ENCODE measurements at regions of chr7 and their contacts with region 1.

Region 1: DNA sequence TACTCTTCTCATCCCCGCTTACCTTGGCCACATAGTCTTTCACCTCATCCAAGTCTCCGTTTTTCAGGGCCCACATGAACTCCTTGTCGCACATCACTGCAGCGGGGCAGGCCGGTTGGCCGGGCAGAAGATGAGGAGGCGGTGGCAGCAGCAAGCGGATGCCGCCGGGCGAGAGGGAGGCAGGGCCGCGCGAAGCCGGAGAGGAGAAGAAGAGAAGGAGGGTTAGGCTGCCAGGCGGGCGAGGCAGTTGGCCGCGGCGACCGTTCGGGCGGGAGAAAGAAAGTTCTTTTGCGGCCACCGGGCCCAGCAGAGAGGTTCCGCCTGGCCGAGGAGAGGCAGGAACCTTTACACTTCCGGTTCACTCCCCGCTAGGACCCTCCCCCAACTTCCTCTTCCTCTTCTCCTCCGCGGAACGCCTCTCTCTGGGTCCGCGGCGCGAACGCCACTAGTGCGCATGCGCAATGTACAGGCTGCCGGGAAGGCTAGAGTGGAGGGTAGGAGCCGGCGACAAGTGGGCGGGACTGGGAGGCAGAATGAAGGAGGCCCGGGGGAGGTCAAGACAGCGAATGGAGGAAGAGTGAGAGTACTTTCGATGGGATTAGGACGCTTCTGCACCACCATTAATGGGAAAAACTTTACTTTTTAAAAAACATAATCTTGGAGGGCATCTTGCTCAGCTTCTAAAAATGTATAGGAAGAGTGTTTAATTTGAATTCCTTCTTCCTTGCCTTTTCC is at the start of gene MTPN:
- DNase-seq: peak; percentile 99
- H3K4me3 Mint-ChIP-seq: peak within 1 kb of the TSS; percentile 90
- H3K27ac Mint-ChIP-seq: peak within 1 kb of the TSS; percentile 92
- H3K4me1 Mint-ChIP-seq: peaks cover 73% of the 10 kb centered on the region
- H3K27me3 Mint-ChIP-seq: no peaks in the 10 kb centered on the region
- total RNA-seq, gene MTPN: 138 to 143 TPM

Region 2: GRCh38 chr7:135147899-135148721 is 829.1 kb before region 1 on chr7 and contains the start of gene TMEM140:
- CTCF ChIA-PET with region 1: no interaction called
- POLR2A ChIA-PET with region 1: no interaction called
- intact Hi-C with region 1: loop called (anchors 5 kb)
- DNase-seq: peak; percentile 73
- H3K4me3 Mint-ChIP-seq: peak within 1 kb of the TSS; percentile 83
- H3K27ac Mint-ChIP-seq: peak within 1 kb of the TSS; percentile 95
- H3K4me1 Mint-ChIP-seq: peaks cover 60% of the 10 kb centered on the region
- H3K27me3 Mint-ChIP-seq: no peaks in the 10 kb centered on the region
- total RNA-seq, gene TMEM140: 8.6 to 10.0 TPM

Region 3: GRCh38 chr7:135886345-135887132 is 90.6 kb before region 1 on chr7:
- CTCF ChIA-PET with region 1: no interaction called
- POLR2A ChIA-PET with region 1: no interaction called
- intact Hi-C with region 1: loop called (anchors 5 kb)
- DNase-seq: no peak
- H3K4me3 Mint-ChIP-seq: no peak overlapping the region
- H3K27ac Mint-ChIP-seq: peak overlapping the region; percentile 3
- H3K4me1 Mint-ChIP-seq: peaks cover 9% of the 10 kb centered on the region
- H3K27me3 Mint-ChIP-seq: no peaks in the 10 kb centered on the region

Region 4: GRCh38 chr7:135901585-135902540 is 75.3 kb before region 1 on chr7:
- CTCF ChIA-PET with region 1: no interaction called
- POLR2A ChIA-PET with region 1: no interaction called
- intact Hi-C with region 1: no loop called
- DNase-seq: no peak
- H3K4me3 Mint-ChIP-seq: no peak overlapping the region
- H3K27ac Mint-ChIP-seq: no peak overlapping the region
- H3K4me1 Mint-ChIP-seq: no peaks in the 10 kb centered on the region
- H3K27me3 Mint-ChIP-seq: no peaks in the 10 kb centered on the region

Region 5: GRCh38 chr7:135993950-135994349 is 16.8 kb after region 1 on chr7:
- CTCF ChIA-PET with region 1: interaction called, 14 read pairs
- POLR2A ChIA-PET with region 1: interaction called, 6 read pairs
- intact Hi-C with region 1: loop called (anchors 1 kb)
- DNase-seq: no peak
- H3K4me3 Mint-ChIP-seq: no peak overlapping the region
- H3K27ac Mint-ChIP-seq: peak overlapping the region; percentile 54
- H3K4me1 Mint-ChIP-seq: peaks cover 25% of the 10 kb centered on the region
- H3K27me3 Mint-ChIP-seq: no peaks in the 10 kb centered on the region

Region 6: DNA sequence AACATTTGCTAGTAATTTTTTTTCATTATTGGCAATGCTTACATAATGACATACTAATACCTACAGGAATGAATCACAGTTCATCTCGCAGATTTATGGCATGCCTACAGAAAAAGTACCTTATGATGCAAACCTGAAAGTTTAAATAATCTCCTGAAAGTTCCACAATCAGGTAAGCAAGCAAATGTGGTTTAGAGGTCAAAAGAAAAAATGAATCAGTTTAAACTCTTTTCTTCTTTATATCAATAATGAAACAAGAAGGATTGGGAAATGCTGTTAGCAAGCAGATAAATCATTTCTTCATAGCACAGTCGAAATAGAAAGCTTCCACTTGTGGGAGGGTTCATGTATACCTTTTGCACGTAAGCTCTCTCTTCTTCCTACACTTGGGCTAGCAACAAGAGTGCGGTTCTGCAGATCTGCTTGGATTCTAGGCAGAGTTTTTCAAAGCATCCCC is 53.7 kb after region 1 on chr7:
- CTCF ChIA-PET with region 1: no interaction called
- POLR2A ChIA-PET with region 1: interaction called, 4 read pairs
- intact Hi-C with region 1: loop called (anchors 1 kb)
- DNase-seq: peak; percentile 34
- H3K4me3 Mint-ChIP-seq: no peak overlapping the region
- H3K27ac Mint-ChIP-seq: peak overlapping the region; percentile 87
- H3K4me1 Mint-ChIP-seq: peaks cover 61% of the 10 kb centered on the region
- H3K27me3 Mint-ChIP-seq: no peaks in the 10 kb centered on the region

Measured in activated CD4-positive, alpha-beta memory T cell treated with anti-CD3 and anti-CD28 coated beads for 36 hours (primary cell).